Activated CD4-positive, alpha-beta memory T cell treated with anti-CD3 and anti-CD28 coated beads, Interleukin-2, amount 10 ng/mL, durations not matched to agents 7 days and 5 days (primary cell): ENCODE measurements at regions of chr14 and their contacts with region 1.

Region 1: GRCh38 chr14:105020815-105021655 is at the start of gene CDCA4:
- DNase-seq: peak; percentile 98
- H3K4me3 Mint-ChIP-seq: peak within 1 kb of the TSS; percentile 96
- H3K27ac Mint-ChIP-seq: peak within 1 kb of the TSS; percentile 94
- H3K4me1 Mint-ChIP-seq: peaks cover 77% of the 10 kb centered on the region
- H3K27me3 Mint-ChIP-seq: no peaks in the 10 kb centered on the region
- total RNA-seq, gene CDCA4: 57.1 to 57.5 TPM

Region 2: GRCh38 chr14:104985675-104986525 is 35.1 kb before region 1 on chr14 and contains the start of gene CLBA1:
- CTCF ChIA-PET with region 1: interaction called, 5 read pairs
- POLR2A ChIA-PET with region 1: interaction called, 44 read pairs
- DNase-seq: peak; percentile 91
- H3K4me3 Mint-ChIP-seq: peak within 1 kb of the TSS; percentile 63
- H3K27ac Mint-ChIP-seq: peak within 1 kb of the TSS; percentile 31
- H3K4me1 Mint-ChIP-seq: peaks cover 8% of the 10 kb centered on the region
- H3K27me3 Mint-ChIP-seq: peaks cover 7% of the 10 kb centered on the region
- total RNA-seq, gene CLBA1: 0.38 to 0.68 TPM

Region 3: DNA sequence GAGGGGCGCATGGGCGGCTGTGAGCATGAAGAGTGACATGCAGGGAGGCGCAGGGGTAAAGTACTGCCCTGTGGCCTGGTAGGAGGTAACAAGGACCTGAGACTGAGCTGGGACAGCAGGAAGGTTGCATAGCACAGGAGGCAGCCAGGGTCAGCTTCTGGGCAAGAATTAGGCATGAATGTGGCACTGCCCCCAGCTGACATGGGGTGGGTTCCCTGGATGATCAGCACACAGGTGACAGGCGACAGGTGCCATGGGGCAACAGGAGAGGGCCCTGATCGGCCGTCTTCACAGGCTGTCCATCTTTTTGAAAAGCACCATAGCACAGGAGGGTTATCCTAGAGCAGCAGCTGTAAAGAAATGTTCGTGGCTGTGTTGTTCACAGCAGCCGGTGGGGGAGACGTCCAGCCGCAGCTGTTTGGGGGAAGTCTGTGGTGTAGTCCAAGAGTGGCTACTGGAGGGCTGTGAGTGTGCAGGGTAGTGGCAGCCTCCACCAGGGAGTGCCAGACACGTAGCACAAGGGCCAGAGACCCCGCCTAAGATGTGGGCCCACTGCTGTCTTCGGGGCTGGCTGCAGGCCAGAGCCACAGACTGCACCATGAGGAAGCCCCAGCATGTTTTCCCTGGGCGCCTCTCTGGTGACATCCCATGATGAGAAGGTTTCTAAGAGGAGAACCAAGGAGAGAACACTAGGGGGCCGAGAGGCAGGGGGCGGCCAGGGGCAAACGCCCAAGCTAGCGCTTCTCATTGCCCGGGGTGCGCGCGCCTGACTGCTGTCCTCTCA is 27.0 kb before region 1 on chr14:
- CTCF ChIA-PET with region 1: no interaction called
- POLR2A ChIA-PET with region 1: interaction called, 17 read pairs
- DNase-seq: no peak
- H3K4me3 Mint-ChIP-seq: no peak overlapping the region
- H3K27ac Mint-ChIP-seq: no peak overlapping the region
- H3K4me1 Mint-ChIP-seq: no peaks in the 10 kb centered on the region
- H3K27me3 Mint-ChIP-seq: no peaks in the 10 kb centered on the region

Region 4: DNA sequence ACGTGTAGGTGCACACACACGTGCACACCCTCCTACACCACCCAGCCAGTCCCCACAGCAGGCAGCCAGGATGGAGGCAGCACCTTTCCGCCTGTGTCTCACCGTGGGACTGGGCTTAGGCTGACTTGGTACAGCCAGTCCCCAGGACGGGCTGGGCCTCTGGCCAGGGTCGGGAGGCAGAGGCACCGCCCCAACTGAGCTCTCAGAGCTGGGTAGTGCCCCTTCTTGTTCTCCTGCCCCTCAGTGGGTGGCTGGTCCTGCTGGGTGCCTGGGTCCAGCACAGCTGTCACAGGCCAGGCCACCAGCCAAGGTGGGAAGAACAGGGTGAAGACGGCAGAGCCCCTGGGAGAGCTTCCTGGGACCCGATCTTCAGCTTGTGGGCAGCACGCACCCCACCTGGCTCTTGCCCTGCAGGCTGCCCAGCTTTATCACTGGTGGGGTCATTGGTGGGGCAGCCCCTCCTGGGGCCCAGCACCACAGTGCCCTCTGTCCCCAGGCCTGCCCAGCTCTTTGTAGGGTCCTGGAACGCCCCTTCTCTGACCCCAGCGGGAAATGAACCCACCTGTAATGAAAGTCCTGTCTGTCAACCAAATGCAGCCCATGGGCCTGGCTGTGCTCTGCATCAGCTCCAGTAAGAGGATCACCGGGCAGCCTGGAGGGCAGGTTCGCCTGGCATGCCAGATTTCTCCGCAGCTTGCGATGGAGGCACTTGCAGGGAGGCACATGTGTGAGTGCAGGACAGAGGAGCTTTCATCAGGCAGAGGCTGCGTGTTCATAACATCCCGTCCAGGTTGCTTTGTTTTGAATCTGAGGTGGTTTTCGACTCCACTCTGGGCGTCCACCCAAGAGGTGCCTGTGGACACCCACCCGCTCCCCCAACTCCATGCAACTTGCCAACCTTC is 14.9 kb before region 1 on chr14:
- CTCF ChIA-PET with region 1: interaction called, 4 read pairs
- POLR2A ChIA-PET with region 1: interaction called, 16 read pairs
- DNase-seq: no peak
- H3K4me3 Mint-ChIP-seq: no peak overlapping the region
- H3K27ac Mint-ChIP-seq: no peak overlapping the region
- H3K4me1 Mint-ChIP-seq: peaks cover 5% of the 10 kb centered on the region
- H3K27me3 Mint-ChIP-seq: no peaks in the 10 kb centered on the region

Region 5: GRCh38 chr14:105116451-105117256 is 95.6 kb after region 1 on chr14:
- CTCF ChIA-PET with region 1: no interaction called
- POLR2A ChIA-PET with region 1: no interaction called
- DNase-seq: no peak
- H3K4me3 Mint-ChIP-seq: no peak overlapping the region
- H3K27ac Mint-ChIP-seq: no peak overlapping the region
- H3K4me1 Mint-ChIP-seq: no peaks in the 10 kb centered on the region
- H3K27me3 Mint-ChIP-seq: peaks cover 20% of the 10 kb centered on the region